ENCODE measurements at regions of chr10 and their contacts with region 1.

Region 1: GRCh38 chr10:4656576-4657182 is 169.3 kb upstream of the AKR1E2 start:
- DNase-seq: peak; percentile 69
- ATAC-seq: peak; percentile 56
- H3K4me3 ChIP-seq: no peak overlapping the region
- H3K4me3 Mint-ChIP-seq: no peak overlapping the region
- H3K27ac ChIP-seq: no peak overlapping the region
- H3K27ac Mint-ChIP-seq: no peak overlapping the region
- H3K4me1 ChIP-seq: no peaks in the 10 kb centered on the region
- H3K4me1 Mint-ChIP-seq: peaks cover 6% of the 10 kb centered on the region
- H3K27me3 ChIP-seq: no peaks in the 10 kb centered on the region
- H3K27me3 Mint-ChIP-seq: peaks cover 10% of the 10 kb centered on the region
- CTCF ChIP-seq: peak; percentile 97

Region 2: DNA sequence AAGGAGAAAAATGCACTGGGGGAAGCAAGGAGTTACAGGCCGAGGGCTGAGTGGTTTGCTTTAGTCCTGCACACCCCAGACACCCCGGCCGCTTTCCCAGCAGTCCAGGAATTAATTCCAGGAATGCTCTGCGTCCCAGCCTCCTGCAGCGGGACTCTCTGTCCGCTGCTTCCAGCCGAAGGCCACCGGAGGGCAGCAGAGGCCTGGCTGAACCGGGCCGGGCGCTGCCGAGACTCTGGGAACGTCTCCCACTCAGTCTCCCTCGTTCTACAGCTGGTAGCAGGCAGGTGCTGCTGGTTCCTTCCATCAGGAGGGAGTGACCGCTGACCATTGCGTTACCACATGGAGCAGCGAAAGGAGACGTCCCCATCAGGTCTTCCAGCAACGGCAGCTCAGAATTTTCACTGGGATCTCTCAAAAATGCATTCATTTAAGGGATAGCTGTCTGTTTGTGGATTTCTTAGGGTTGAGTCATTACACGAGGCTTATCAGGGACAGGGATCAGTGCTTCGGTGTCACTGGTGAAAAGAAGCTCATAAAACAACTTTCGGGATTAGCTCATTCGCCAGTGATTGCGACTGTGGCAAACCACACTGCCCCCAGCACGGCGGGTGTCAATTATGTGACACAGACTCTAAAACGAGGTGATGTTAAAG is 1459.2 kb before region 1 on chr10:
- CTCF ChIA-PET with region 1: interaction called, 18 read pairs
- POLR2A ChIA-PET with region 1: no interaction called
- intact Hi-C with region 1: loop called (anchors 1 kb)
- DNase-seq: peak; percentile 41
- ATAC-seq: peak; percentile 36
- H3K4me3 ChIP-seq: no peak overlapping the region
- H3K4me3 Mint-ChIP-seq: peak overlapping the region; percentile 2
- H3K27ac ChIP-seq: no peak overlapping the region
- H3K27ac Mint-ChIP-seq: no peak overlapping the region
- H3K4me1 ChIP-seq: peaks cover 7% of the 10 kb centered on the region in 2 donors
- H3K4me1 Mint-ChIP-seq: peaks cover 10% of the 10 kb centered on the region
- H3K27me3 ChIP-seq: peaks cover 0 to 51% (median 10%) of the 10 kb centered on the region in 4 experiments
- H3K27me3 Mint-ChIP-seq: peaks cover 48% of the 10 kb centered on the region
- CTCF ChIP-seq: peak; percentile 51

Region 3: DNA sequence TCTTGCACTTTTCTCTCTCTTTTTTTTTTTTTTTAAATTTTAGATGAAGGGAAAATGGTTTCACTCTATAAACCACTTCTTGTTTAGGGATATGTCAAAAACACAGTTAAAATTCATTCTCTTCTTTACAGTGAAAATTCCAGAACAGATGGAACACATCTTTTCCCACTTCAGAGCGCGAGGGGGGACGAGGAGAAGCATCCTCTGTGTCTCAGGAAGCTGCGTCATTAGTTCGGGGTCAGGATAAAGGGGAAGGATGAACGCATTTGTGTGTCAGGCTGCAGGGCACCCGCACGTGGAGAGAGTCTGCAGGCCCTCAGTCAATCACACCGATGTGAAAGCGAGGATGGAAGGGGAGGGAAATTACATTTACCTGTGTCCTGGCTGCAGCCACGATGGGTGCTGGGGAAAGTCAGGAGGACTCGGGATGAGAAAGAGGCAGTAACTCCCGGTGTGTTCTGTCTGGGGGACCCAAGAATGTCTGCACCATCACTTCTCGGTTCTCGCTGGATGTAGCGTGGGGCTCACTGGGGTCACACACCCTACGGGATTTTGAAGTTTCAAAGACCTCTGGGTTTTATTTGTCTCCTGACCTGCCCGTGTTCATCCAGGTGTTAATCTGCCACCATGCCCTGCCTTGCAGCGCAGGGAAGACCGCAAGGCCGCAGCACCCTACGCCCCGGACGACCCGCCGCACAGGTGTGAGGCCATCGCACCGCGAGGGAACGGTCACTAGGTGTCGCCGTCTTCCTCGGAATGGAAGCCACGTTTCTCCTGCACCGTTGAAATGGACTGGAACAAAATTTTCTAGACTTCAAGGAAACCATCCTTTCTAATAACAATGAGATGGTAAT is 1417.4 kb before region 1 on chr10:
- CTCF ChIA-PET with region 1: interaction called, 102 read pairs
- POLR2A ChIA-PET with region 1: interaction called, 6 read pairs
- intact Hi-C with region 1: loop called (anchors 1 kb)
- DNase-seq: peak; percentile 76
- ATAC-seq: peak; percentile 78
- H3K4me3 ChIP-seq: no peak overlapping the region
- H3K4me3 Mint-ChIP-seq: no peak overlapping the region
- H3K27ac ChIP-seq: no peak overlapping the region
- H3K27ac Mint-ChIP-seq: no peak overlapping the region
- H3K4me1 ChIP-seq: peaks cover 0 to 5% of the 10 kb centered on the region in 2 donors
- H3K4me1 Mint-ChIP-seq: peaks cover 5% of the 10 kb centered on the region
- H3K27me3 ChIP-seq: peaks cover 0 to 12% (median 4%) of the 10 kb centered on the region in 4 experiments
- H3K27me3 Mint-ChIP-seq: peaks cover 9% of the 10 kb centered on the region
- CTCF ChIP-seq: peak; percentile 95

Region 4: DNA sequence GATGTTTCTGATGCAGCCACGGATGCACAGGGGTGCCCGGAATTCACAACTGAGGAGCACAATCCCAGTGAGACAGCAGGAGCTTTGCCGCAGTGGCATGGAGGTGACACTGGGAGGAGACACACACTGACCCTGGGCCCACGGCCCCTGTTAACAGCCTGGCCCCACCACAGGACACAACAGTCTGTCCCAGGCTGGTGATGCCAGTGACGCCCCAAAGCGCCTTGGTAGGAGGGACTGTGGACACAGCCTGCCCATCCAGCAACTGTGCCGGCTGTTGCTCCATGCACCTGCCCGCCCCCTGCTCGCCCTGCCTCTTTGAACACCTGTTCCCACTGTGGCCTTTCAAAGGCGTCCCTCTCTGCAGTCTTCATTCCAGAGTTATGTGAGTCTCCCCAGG is 921.5 kb before region 1 on chr10:
- CTCF ChIA-PET with region 1: interaction called, 6 read pairs
- POLR2A ChIA-PET with region 1: no interaction called
- intact Hi-C with region 1: loop called (anchors 5 kb)
- DNase-seq: peak; percentile 27
- ATAC-seq: peak; percentile 56
- H3K4me3 ChIP-seq: no peak overlapping the region
- H3K4me3 Mint-ChIP-seq: no peak overlapping the region
- H3K27ac ChIP-seq: no peak overlapping the region
- H3K27ac Mint-ChIP-seq: peak overlapping the region; percentile 47
- H3K4me1 ChIP-seq: no peaks in the 10 kb centered on the region
- H3K4me1 Mint-ChIP-seq: no peaks in the 10 kb centered on the region
- H3K27me3 ChIP-seq: no peaks in the 10 kb centered on the region
- H3K27me3 Mint-ChIP-seq: no peaks in the 10 kb centered on the region
- CTCF ChIP-seq: peak; percentile 18

Region 5: DNA sequence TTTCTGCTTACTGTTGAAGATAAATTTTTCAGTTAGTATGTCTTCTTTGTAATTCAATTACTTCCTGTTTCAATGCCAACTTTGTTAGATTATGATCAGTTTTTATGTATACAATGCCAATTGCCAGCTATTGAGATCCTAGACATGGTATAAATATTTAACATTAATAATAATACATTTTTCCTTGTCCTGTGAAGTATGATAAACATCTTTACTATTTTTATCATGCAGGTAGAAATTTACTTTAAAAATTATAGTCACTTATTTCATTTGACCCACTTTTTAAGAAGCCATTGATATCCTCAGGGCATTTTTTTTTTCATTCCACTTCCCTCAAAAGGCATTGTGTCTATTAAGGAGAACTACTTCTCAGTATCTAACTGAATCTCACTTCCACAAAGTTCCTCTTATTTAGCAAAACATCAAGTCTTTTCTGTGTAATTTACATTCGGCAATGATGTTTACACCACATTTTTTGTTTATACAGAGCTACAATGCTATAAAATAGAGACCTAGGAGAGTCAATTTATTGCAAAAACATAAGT is 219.0 kb before region 1 on chr10:
- CTCF ChIA-PET with region 1: no interaction called
- POLR2A ChIA-PET with region 1: no interaction called
- intact Hi-C with region 1: no loop called
- DNase-seq: no peak
- ATAC-seq: no peak
- H3K4me3 ChIP-seq: no peak overlapping the region
- H3K4me3 Mint-ChIP-seq: no peak overlapping the region
- H3K27ac ChIP-seq: no peak overlapping the region
- H3K27ac Mint-ChIP-seq: no peak overlapping the region
- H3K4me1 ChIP-seq: no peaks in the 10 kb centered on the region
- H3K4me1 Mint-ChIP-seq: no peaks in the 10 kb centered on the region
- H3K27me3 ChIP-seq: no peaks in the 10 kb centered on the region
- H3K27me3 Mint-ChIP-seq: no peaks in the 10 kb centered on the region
- CTCF ChIP-seq: no peak

Region 6: GRCh38 chr10:4671451-4672145 is 14.9 kb after region 1 on chr10:
- CTCF ChIA-PET with region 1: interaction called, 24 read pairs
- POLR2A ChIA-PET with region 1: no interaction called
- intact Hi-C with region 1: no loop called
- DNase-seq: no peak
- ATAC-seq: no peak
- H3K4me3 ChIP-seq: no peak overlapping the region
- H3K4me3 Mint-ChIP-seq: no peak overlapping the region
- H3K27ac ChIP-seq: no peak overlapping the region
- H3K27ac Mint-ChIP-seq: no peak overlapping the region
- H3K4me1 ChIP-seq: no peaks in the 10 kb centered on the region
- H3K4me1 Mint-ChIP-seq: no peaks in the 10 kb centered on the region
- H3K27me3 ChIP-seq: peaks cover 0 to 2% (median 0%) of the 10 kb centered on the region in 4 experiments
- H3K27me3 Mint-ChIP-seq: peaks cover 17% of the 10 kb centered on the region
- CTCF ChIP-seq: no peak

Region 7: DNA sequence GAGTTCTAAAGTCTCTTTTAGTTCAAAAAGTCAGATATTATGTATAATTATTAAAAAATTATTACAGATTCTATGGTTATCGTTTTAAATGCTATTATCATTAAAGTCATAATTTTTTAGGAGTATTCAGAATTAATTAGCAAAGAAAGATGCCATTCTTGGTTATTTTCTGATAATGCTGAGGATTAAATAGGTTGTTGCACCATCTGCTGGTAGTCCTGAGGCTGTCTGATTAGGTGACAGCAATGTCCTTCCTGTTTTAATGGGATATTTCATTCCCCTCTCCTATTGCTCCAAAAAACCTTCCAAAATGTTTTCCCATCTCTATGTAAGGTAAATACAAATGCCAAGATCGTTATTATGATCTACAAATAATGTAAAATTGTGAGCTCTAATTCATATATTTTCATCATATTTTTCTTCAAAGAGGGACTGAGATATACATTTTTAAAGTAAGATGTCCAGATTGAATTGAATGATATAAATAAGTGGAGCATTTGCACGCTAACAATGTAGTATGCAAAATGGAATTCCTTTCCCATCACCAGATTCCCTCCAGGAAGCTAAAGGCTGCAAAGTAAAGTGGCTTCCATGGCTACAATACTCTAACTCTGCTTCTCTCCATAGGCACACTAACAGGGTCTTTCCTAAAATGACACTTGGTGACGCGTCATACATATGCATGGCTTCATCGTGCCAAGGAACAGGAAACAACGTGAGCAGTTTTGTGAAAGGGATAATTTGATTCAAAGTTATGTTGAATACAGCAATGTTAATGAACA is 110.5 kb after region 1 on chr10:
- CTCF ChIA-PET with region 1: interaction called, 7 read pairs
- POLR2A ChIA-PET with region 1: no interaction called
- intact Hi-C with region 1: loop called (anchors 1 kb)
- DNase-seq: peak; percentile 27
- ATAC-seq: no peak
- H3K4me3 ChIP-seq: no peak overlapping the region
- H3K4me3 Mint-ChIP-seq: no peak overlapping the region
- H3K27ac ChIP-seq: no peak overlapping the region
- H3K27ac Mint-ChIP-seq: no peak overlapping the region
- H3K4me1 ChIP-seq: no peaks in the 10 kb centered on the region
- H3K4me1 Mint-ChIP-seq: no peaks in the 10 kb centered on the region
- H3K27me3 ChIP-seq: peaks cover 0 to 7% (median under 1%) of the 10 kb centered on the region in 4 experiments
- H3K27me3 Mint-ChIP-seq: peaks cover 8% of the 10 kb centered on the region
- CTCF ChIP-seq: peak; percentile 72

Measured in B cell (primary cell).